Aorta (tissue), 5 donors: ENCODE measurements at regions of chr6 and their contacts with region 1.

Region 1: GRCh38 chr6:124076336-124077048 is 272.8 kb downstream of the NKAIN2 start:
- DNase-seq: no peak
- ATAC-seq: no peak
- H3K4me3 ChIP-seq: no peak overlapping the region
- H3K27ac ChIP-seq: no peak overlapping the region
- H3K4me1 ChIP-seq: no peaks in the 10 kb centered on the region
- H3K27me3 ChIP-seq: peaks cover 0 to 3% of the 10 kb centered on the region in 2 donors

Region 2: GRCh38 chr6:123467392-123467791 is 609.1 kb before region 1 on chr6:
- intact Hi-C with region 1: loop called in 1 of 2 experiments (anchors 10 kb)
- DNase-seq: no peak
- ATAC-seq: no peak
- H3K4me3 ChIP-seq: no peak overlapping the region
- H3K27ac ChIP-seq: no peak overlapping the region
- H3K4me1 ChIP-seq: no peaks in the 10 kb centered on the region
- H3K27me3 ChIP-seq: no peaks in the 10 kb centered on the region